Lower leg skin (tissue), 4 donors: ENCODE measurements at regions of chr17 and their contacts with region 1.

Region 1: DNA sequence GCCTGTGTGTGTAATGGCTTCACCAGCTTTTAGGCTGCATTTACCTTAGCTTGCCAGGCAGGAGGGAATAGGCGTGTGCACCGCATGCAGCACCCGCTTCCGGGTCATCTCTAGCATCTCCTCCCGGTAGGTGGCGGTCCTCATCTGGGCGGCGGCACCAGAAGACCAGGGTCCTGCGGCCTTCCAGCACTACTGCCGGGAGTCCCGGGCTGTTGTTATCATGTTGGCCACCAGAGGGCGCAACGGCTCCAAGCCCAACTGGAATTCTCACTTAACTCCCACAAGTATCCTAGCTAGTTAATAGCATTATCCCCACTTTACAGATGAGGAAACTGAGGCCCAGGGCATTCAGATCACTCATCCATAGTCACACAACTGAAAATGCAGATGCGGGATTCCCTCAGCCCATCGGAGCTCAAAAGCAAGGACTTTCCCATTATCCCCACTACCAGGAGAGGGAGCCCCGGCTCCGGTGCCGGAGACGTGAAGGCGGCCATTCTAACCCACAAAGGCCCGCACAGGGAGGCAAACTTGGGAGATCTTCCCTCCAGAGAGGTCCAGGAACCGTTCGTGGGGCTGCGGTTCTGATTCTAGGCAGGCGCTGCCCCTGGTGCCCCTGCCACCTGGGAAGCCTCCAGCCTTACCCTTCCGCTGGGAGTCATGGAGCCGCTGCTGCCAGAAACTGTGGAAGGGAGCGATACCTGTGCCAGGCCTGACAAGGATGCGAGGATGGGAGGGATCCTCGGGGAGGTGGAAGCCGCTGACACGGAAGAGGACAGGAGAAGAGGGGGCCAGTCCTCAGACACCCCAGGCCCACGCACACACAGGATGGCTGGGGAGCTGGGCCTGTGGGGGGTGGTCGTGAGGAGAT is 23.9 kb downstream of the LGALS9 start:
- DNase-seq: peak; percentile 59 to 94
- H3K4me3 ChIP-seq: no peak overlapping the region
- CTCF ChIP-seq: peak in 1 of 3 donors; percentile 72
- POLR2A ChIP-seq: no peak

Region 2: DNA sequence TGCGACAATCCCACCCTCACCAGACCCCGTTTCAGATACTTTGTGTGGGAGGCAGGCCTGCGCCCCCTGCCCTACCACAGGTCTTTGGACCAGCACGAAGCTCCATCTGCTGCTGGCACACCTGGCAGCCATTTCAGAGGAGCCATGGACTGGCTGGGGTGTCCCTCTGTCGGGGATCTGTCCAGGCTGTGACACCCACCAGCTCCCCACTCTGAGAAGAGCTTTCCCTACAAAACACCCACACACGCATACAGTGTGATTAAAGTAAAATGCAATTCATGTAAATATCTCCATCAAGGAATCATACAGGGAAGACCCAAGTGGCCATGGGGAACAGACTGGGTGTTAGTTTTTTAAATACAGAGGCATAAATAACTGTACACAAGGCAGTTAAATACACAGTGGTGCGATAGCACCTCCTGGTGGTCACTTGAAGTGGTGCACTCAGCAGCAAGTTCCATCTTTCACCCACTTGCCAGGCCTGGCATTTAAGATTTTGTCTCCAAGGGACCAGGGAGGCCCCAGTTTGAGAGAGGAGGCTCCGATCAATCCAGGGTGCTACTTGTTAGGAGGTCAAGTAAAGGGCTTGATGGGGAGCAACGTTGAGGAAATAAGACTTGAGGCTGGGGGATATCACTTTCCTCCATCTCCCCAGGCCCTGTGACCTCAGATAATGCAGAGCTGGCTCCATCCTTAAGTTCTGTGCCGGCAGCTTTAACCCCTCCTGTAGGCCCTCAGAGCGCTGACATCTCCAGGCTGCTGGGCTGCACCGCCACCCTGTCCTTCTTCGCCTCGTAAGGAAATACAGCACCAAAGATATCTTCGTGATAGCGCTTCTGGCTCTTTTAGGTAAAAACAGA is 101.9 kb after region 1 on chr17:
- intact Hi-C with region 1: loop called (anchors 5 kb)
- DNase-seq: peak in 1 of 2 donors; percentile 49
- H3K4me3 ChIP-seq: no peak overlapping the region
- CTCF ChIP-seq: peak in 1 of 3 donors; percentile 62
- POLR2A ChIP-seq: no peak